ENCODE measurements at regions of chr16 and their contacts with region 1.

Region 1: DNA sequence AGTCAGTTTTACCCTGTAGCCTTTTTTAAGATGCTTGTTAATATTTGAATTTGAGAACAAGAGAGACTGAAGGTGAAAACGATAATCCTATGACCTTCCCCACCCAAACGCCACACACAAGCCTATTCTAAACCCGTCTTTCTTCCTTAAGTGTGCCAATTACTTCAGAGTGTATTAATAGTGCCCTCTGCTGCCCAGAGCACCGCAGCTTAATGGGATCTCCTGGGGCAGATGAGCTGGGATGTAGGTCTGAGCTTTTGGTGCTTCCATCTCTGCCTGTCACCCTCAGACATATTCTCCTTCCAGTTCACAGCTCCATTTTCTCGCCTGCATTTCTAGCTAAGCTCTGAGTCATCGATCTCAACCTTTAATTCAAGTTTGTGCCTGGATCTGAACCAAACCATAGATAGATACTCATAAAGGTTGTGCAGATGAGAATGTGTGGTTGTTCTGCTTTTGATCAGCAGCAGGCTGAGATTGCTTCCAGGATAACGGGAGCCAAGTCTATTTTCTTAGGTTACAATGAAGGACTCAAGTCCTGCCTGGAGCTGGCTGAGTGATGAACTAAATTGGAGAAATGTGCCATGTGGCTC is 46.4 kb upstream of the CDH13 start:
- DNase-seq: peak in 1 of 2 donors; percentile 56
- ATAC-seq: peak; percentile 71 to 74 (median 72)
- H3K4me3 ChIP-seq: no peak overlapping the region
- H3K27ac ChIP-seq: no peak overlapping the region
- H3K4me1 ChIP-seq: peaks cover 16% of the 10 kb centered on the region
- H3K27me3 ChIP-seq: no peaks in the 10 kb centered on the region
- CTCF ChIP-seq: peak; percentile 49

Region 2: GRCh38 chr16:82368041-82368440 is 212.4 kb before region 1 on chr16:
- intact Hi-C with region 1: loop called (anchors 5 kb)
- DNase-seq: peak in 1 of 2 donors; percentile 59
- ATAC-seq: peak; percentile 61 to 90 (median 84)
- H3K4me3 ChIP-seq: no peak overlapping the region
- H3K27ac ChIP-seq: no peak overlapping the region
- H3K4me1 ChIP-seq: no peaks in the 10 kb centered on the region
- H3K27me3 ChIP-seq: no peaks in the 10 kb centered on the region
- CTCF ChIP-seq: peak; percentile 31

Region 3: GRCh38 chr16:82373976-82374375 is 206.4 kb before region 1 on chr16:
- intact Hi-C with region 1: loop called (anchors 5 kb)
- DNase-seq: no peak
- ATAC-seq: no peak
- H3K4me3 ChIP-seq: no peak overlapping the region
- H3K27ac ChIP-seq: no peak overlapping the region
- H3K4me1 ChIP-seq: no peaks in the 10 kb centered on the region
- H3K27me3 ChIP-seq: no peaks in the 10 kb centered on the region
- CTCF ChIP-seq: no peak

Region 4: GRCh38 chr16:82456683-82457082 is 123.7 kb before region 1 on chr16:
- intact Hi-C with region 1: loop called in 1 of 2 experiments (anchors 5 kb)
- DNase-seq: peak; percentile 26 to 54
- ATAC-seq: peak; percentile 69 to 87 (median 76)
- H3K4me3 ChIP-seq: no peak overlapping the region
- H3K27ac ChIP-seq: no peak overlapping the region
- H3K4me1 ChIP-seq: no peaks in the 10 kb centered on the region
- H3K27me3 ChIP-seq: no peaks in the 10 kb centered on the region
- CTCF ChIP-seq: peak; percentile 71

Measured in psoas muscle (tissue), 8 donors.